Activated T-helper 2 cell treated with anti-CD3 and anti-CD28 coated beads, Interferon-gamma antibody, Interleukin-2, Interleukin-4, amounts not matched to agents 10 μg/mL and 5 μg/mL and 100 μg/mL, durations not matched to agents 14 hours and 24 hours and 36 hours (primary cell): ENCODE measurements at regions of chr3 and their contacts with region 1.

Region 1: GRCh38 chr3:138118612-138119422 is 3.4 kb upstream of the DZIP1L start:
- DNase-seq: peak; percentile 36
- H3K4me3 Mint-ChIP-seq: no peak overlapping the region
- H3K27ac Mint-ChIP-seq: no peak overlapping the region
- H3K4me1 Mint-ChIP-seq: peaks cover 5% of the 10 kb centered on the region
- H3K27me3 Mint-ChIP-seq: peaks cover 30% of the 10 kb centered on the region

Region 2: DNA sequence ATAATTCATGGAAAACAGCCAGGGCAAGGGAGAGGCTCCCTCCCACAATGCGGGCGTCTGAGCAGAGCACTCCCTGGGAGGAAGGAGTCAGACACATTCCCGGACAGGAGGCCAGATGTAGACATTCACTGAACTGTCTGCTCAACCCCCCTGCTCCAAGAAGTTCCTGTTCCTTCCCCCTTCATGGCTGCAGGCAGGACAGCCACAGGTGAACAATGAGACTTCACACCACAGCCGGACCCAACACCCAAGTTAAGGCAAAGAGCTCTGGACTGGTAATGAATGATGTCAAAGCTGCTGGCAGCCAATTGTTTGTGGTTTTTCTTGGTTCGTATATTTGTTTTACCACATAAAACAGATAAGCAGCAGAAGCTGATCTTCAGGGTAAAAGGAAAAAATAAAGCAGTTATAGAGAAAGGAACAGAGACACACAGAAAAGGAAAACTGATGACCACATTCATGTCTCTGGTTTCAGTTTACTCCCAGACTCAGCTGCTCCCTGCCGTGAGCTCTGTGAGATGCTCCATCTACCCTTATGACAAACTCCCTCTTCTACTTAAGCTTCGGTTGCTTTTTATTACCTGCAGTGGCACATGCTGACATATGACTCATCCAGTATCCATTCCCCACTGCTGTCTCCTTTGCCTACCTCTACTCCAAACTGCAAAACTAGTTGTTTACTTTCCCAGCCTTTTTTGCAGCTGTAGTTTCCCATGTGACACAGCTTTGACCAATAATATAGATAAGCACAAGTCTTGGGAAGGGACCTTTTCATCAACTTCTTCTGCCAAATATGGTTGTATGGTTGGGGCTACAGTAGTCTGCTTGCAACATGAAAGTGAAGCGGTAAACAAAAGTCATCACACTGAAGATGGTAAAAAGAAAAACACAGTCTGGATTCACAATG is 36.5 kb before region 1 on chr3:
- intact Hi-C with region 1: loop called (anchors 5 kb)
- DNase-seq: no peak
- H3K4me3 Mint-ChIP-seq: peak overlapping the region; percentile 19
- H3K27ac Mint-ChIP-seq: peak overlapping the region; percentile 48
- H3K4me1 Mint-ChIP-seq: peaks cover 41% of the 10 kb centered on the region
- H3K27me3 Mint-ChIP-seq: peaks cover 8% of the 10 kb centered on the region

Region 3: DNA sequence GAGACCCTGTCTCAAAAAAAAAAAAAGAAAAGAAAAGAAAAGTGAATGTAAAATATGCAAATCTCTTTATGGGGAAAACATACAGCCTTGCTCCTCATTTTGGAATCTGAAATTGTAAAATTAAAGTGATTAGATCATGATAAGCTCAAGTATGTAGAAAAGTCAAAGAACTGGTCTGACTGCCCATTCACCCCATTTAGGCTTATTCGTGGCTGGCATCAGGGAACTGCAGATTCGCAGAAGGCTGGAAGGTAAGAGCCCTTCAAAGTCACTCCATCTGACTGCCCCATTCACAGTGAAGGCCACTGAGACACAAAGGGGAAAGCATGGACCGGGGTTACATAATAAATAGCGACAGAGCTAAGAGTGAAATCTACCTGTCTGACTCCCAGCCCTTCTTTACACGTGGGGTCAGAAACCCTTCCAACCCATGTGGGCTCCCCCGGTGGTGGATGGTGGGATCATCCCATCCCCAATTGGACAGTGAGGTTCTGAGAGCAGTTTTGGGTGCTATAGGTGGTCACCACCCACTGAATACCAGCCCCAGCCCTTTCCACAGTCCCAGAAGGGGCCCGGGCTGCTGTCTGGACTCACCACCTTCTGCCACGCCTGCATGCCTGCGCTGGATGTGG is 21.5 kb before region 1 on chr3:
- intact Hi-C with region 1: loop called (anchors 1 kb)
- DNase-seq: no peak
- H3K4me3 Mint-ChIP-seq: no peak overlapping the region
- H3K27ac Mint-ChIP-seq: no peak overlapping the region
- H3K4me1 Mint-ChIP-seq: peaks cover 3% of the 10 kb centered on the region
- H3K27me3 Mint-ChIP-seq: peaks cover 18% of the 10 kb centered on the region

Region 4: GRCh38 chr3:138717348-138717747 is 598.5 kb after region 1 on chr3:
- intact Hi-C with region 1: no loop called
- DNase-seq: no peak
- H3K4me3 Mint-ChIP-seq: no peak overlapping the region
- H3K27ac Mint-ChIP-seq: no peak overlapping the region
- H3K4me1 Mint-ChIP-seq: peaks cover 8% of the 10 kb centered on the region
- H3K27me3 Mint-ChIP-seq: no peaks in the 10 kb centered on the region

Region 5: GRCh38 chr3:138862924-138863775 is 744.3 kb after region 1 on chr3:
- intact Hi-C with region 1: no loop called
- DNase-seq: no peak
- H3K4me3 Mint-ChIP-seq: no peak overlapping the region
- H3K27ac Mint-ChIP-seq: no peak overlapping the region
- H3K4me1 Mint-ChIP-seq: peaks cover 3% of the 10 kb centered on the region
- H3K27me3 Mint-ChIP-seq: no peaks in the 10 kb centered on the region